ENCODE measurements at regions of chr13 and their contacts with region 1.

Region 1: DNA sequence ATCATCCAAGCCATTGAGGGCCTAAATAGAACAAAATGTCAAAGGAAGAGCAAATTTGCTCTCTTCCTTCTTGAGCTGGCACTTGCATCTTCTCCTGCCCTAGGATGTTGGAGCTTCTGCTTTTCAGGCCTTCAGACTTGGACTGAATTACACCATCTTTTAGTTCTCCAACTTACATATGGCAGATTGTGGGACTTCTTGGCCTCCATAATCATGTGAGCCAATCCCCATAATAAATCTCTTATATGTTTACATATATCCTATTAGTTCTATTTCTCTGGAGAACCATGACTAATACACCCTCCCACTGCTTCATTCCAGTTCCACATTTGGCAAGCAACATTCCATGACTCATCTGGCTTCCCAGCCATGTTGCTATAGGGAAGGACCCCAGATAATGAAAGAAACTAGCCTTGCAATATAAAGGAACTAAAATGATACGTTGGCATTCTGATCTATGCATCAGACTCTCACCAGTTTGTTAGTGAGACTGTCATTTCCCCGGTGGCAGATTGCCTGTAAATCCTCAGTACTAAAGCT is 11.0 kb upstream of the ACOD1 start:
- DNase-seq: no peak
- ATAC-seq: no peak
- H3K4me3 ChIP-seq: no peak overlapping the region
- H3K4me3 Mint-ChIP-seq: no peak overlapping the region
- H3K27ac ChIP-seq: no peak overlapping the region
- H3K27ac Mint-ChIP-seq: no peak overlapping the region
- H3K4me1 ChIP-seq: no peaks in the 10 kb centered on the region
- H3K4me1 Mint-ChIP-seq: no peaks in the 10 kb centered on the region
- H3K27me3 ChIP-seq: no peaks in the 10 kb centered on the region
- H3K27me3 Mint-ChIP-seq: no peaks in the 10 kb centered on the region

Region 2: DNA sequence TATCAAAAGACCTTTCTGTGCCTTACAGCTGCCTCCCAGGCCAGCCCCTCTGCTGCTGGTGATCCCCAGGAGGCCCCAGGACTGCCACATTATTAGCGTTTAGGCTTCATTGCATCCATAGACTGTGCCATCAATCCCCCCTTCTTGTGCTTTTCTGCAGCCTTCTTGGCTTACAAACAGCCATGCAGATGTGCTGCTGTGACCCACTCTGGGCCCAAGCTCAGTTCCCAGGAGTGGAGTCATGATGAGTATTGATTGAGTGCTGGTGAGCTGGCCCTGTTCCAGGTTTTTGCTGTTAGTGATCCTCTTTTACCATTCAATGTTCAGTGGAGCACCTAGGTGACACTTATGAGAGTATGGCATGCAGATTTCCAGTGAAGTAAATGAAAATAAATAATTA is 700.2 kb after region 1 on chr13:
- CTCF ChIA-PET with region 1: no interaction called
- POLR2A ChIA-PET with region 1: interaction called in 1 of 2 experiments, 17 read pairs
- DNase-seq: no peak
- ATAC-seq: no peak
- H3K4me3 ChIP-seq: no peak overlapping the region
- H3K4me3 Mint-ChIP-seq: no peak overlapping the region
- H3K27ac ChIP-seq: no peak overlapping the region
- H3K27ac Mint-ChIP-seq: no peak overlapping the region
- H3K4me1 ChIP-seq: no peaks in the 10 kb centered on the region
- H3K4me1 Mint-ChIP-seq: no peaks in the 10 kb centered on the region
- H3K27me3 ChIP-seq: no peaks in the 10 kb centered on the region
- H3K27me3 Mint-ChIP-seq: peaks cover 0 to 3% of the 10 kb centered on the region in 2 donors